ENCODE measurements at regions of chr4 and their contacts with region 1.

Region 1: GRCh38 chr4:142480244-142480643 is 365.9 kb downstream of the INPP4B start:
- DNase-seq: no peak
- H3K4me3 ChIP-seq: no peak overlapping the region
- H3K27ac ChIP-seq: no peak overlapping the region
- H3K4me1 ChIP-seq: peaks cover 0 to 2% of the 10 kb centered on the region in 2 donors
- H3K27me3 ChIP-seq: no peaks in the 10 kb centered on the region
- CTCF ChIP-seq: no peak
- POLR2A ChIP-seq: no peak

Region 2: GRCh38 chr4:142840516-142841123 is 360.4 kb after region 1 on chr4:
- intact Hi-C with region 1: loop called in 1 of 2 experiments (anchors 5 kb)
- DNase-seq: no peak
- H3K4me3 ChIP-seq: no peak overlapping the region
- H3K27ac ChIP-seq: no peak overlapping the region
- H3K4me1 ChIP-seq: peaks cover 5 to 10% of the 10 kb centered on the region in 2 donors
- H3K27me3 ChIP-seq: no peaks in the 10 kb centered on the region
- CTCF ChIP-seq: peak; percentile 38 to 70 (median 46)
- POLR2A ChIP-seq: no peak